ENCODE measurements at regions of chr5 and their contacts with region 1.

Region 1: GRCh38 chr5:96614110-96614691 is 48.0 kb upstream of the CAST start:
- DNase-seq: peak; percentile 38 to 54
- H3K4me3 ChIP-seq: no peak overlapping the region
- H3K27ac ChIP-seq: no peak overlapping the region
- H3K4me1 ChIP-seq: peaks cover 0 to 3% (median 0%) of the 10 kb centered on the region in 4 experiments; a peak in 1 of 7 replicates
- H3K27me3 ChIP-seq: no peaks in the 10 kb centered on the region
- CTCF ChIP-seq: peak in 2 of 3 experiments; percentile 56 to 71; a peak in 3 of 4 replicates
- EP300 ChIP-seq: no peak
- POLR2A ChIP-seq: no peak
- RAD21 ChIP-seq: peak; percentile 93 to 94

Region 2: DNA sequence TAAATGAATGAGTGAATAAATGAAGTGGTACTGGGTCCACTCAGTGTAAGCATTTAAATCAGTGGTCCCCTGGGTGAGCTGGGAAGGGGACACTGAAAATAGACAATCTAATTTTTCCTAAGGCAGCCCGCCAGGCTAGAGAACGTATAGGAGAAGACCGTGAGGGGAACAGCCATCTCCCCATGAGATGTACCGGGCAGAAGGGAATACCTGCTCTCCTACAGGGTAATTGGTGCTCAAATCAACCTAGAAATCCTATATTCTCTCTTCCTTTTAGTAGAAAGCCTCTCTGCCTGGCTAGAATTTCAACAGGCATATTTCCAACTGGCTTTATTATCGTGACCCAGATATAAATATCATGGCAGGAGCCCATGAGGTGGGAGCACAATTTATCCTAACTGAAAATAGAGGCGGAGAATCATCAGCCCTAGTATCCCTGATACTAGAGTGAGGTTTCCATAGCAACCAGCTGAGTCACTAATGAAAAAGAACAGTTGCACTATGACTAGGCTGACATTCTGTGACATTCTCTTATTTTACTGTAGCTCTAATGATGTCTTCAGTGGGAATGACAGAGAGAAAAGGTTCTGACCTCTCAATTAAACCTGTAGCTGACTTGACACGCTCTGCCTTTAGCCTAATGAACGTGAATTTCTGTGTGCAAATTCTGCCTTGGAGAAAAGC is 48.5 kb before region 1 on chr5:
- CTCF ChIA-PET with region 1: no interaction called
- POLR2A ChIA-PET with region 1: no interaction called
- DNase-seq: no peak
- H3K4me3 ChIP-seq: no peak overlapping the region
- H3K27ac ChIP-seq: no peak overlapping the region
- H3K4me1 ChIP-seq: no peaks in the 10 kb centered on the region
- H3K27me3 ChIP-seq: no peaks in the 10 kb centered on the region
- CTCF ChIP-seq: no peak
- EP300 ChIP-seq: no peak
- POLR2A ChIP-seq: no peak
- RAD21 ChIP-seq: no peak

Region 3: GRCh38 chr5:96601811-96602244 is 12.4 kb before region 1 on chr5:
- CTCF ChIA-PET with region 1: interaction called, 46 read pairs
- POLR2A ChIA-PET with region 1: no interaction called
- DNase-seq: peak in 1 of 2 experiments; percentile 58
- H3K4me3 ChIP-seq: no peak overlapping the region
- H3K27ac ChIP-seq: no peak overlapping the region
- H3K4me1 ChIP-seq: peaks cover 0 to 5% (median 0%) of the 10 kb centered on the region in 4 experiments; a peak in 1 of 7 replicates
- H3K27me3 ChIP-seq: no peaks in the 10 kb centered on the region
- CTCF ChIP-seq: peak; percentile 16 to 76 (median 75)
- EP300 ChIP-seq: no peak
- POLR2A ChIP-seq: no peak
- RAD21 ChIP-seq: peak; percentile 60 to 72

Region 4: GRCh38 chr5:96662725-96663513 is 48.7 kb after region 1 on chr5:
- CTCF ChIA-PET with region 1: interaction called, 15 read pairs
- POLR2A ChIA-PET with region 1: no interaction called
- DNase-seq: peak in 1 of 2 experiments; percentile 95
- H3K4me3 ChIP-seq: peak overlapping the region; percentile 79 to 92 (median 86)
- H3K27ac ChIP-seq: no peak overlapping the region
- H3K4me1 ChIP-seq: peaks cover 0 to 2% (median under 1%) of the 10 kb centered on the region in 4 experiments; a peak in 2 of 7 replicates
- H3K27me3 ChIP-seq: peaks cover 2 to 8% (median 6%) of the 10 kb centered on the region in 4 experiments; a peak in 4 of 7 replicates
- CTCF ChIP-seq: no peak
- EP300 ChIP-seq: no peak
- POLR2A ChIP-seq: peak in 1 of 2 experiments; percentile 56; a peak in 1 of 3 replicates
- RAD21 ChIP-seq: no peak

Region 5: GRCh38 chr5:96687812-96688453 is 73.7 kb after region 1 on chr5:
- CTCF ChIA-PET with region 1: interaction called, 89 read pairs
- POLR2A ChIA-PET with region 1: no interaction called
- DNase-seq: no peak
- H3K4me3 ChIP-seq: no peak overlapping the region
- H3K27ac ChIP-seq: no peak overlapping the region
- H3K4me1 ChIP-seq: no peaks in the 10 kb centered on the region
- H3K27me3 ChIP-seq: no peaks in the 10 kb centered on the region
- CTCF ChIP-seq: peak in 2 of 3 experiments; percentile 49 to 53; a peak in 2 of 4 replicates
- EP300 ChIP-seq: no peak
- POLR2A ChIP-seq: no peak
- RAD21 ChIP-seq: peak; percentile 71 to 72

Region 6: DNA sequence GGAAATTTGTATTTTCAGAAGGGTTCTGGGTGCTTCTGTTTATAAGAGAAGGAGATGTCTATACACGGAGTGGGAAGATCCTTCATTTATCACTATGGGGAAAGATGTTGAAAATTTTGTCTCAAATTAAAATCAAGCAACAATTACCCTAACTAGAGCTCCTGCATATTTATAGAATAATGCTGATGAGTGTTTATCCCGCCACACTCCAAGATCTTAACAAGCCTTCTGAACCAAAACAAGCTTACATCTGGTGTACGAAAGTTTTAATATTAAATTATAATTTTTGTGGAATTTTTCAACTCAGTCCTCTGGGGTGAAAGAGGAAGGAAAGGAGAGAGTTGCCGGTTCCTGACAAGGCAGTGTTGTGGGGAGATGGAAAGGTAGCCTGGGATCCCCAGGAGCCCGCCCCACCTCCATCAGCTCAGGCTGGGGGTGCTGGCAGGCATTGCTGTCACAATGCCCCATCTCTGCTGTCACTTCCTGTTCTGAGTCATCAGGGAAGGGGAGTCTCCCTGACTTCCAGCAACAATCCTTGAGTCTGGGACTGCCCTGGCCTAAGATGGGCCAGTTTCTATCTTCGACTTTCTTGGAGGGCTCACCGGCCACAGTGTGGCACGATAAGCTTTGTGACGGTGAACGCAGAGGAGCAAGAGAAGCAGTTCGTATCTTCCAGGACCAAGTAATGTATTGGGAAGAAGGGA is 129.0 kb after region 1 on chr5:
- CTCF ChIA-PET with region 1: interaction called, 14 read pairs
- POLR2A ChIA-PET with region 1: no interaction called
- DNase-seq: no peak
- H3K4me3 ChIP-seq: no peak overlapping the region
- H3K27ac ChIP-seq: no peak overlapping the region
- H3K4me1 ChIP-seq: no peaks in the 10 kb centered on the region; a peak in 1 of 7 replicates
- H3K27me3 ChIP-seq: no peaks in the 10 kb centered on the region
- CTCF ChIP-seq: no peak
- EP300 ChIP-seq: no peak
- POLR2A ChIP-seq: no peak
- RAD21 ChIP-seq: no peak

Measured in H1 (cell line).